Caco-2 (cell line): ENCODE measurements at regions of chr20 and their contacts with region 1.

Region 1: GRCh38 chr20:41136680-41137613 is at the start of gene PLCG1:
- DNase-seq: peak; percentile 93 to 99
- H3K4me3 ChIP-seq: peak within 1 kb of the TSS; percentile 96
- H3K4me3 Mint-ChIP-seq: peak within 1 kb of the TSS; percentile 83
- H3K27ac Mint-ChIP-seq: peak within 1 kb of the TSS; percentile 82
- H3K4me1 ChIP-seq: peaks cover 17% of the 10 kb centered on the region
- H3K4me1 Mint-ChIP-seq: peaks cover 21% of the 10 kb centered on the region
- H3K27me3 ChIP-seq: no peaks in the 10 kb centered on the region
- H3K27me3 Mint-ChIP-seq: no peaks in the 10 kb centered on the region
- CTCF ChIP-seq: no peak
- total RNA-seq, gene PLCG1: 196 and 205 TPM in 2 replicates

Region 2: GRCh38 chr20:41078329-41078728 is 58.6 kb before region 1 on chr20:
- CTCF ChIA-PET with region 1: no interaction called
- POLR2A ChIA-PET with region 1: no interaction called
- intact Hi-C with region 1: loop called (anchors 10 kb)
- DNase-seq: peak in 1 of 2 experiments; percentile 80
- H3K4me3 ChIP-seq: no peak overlapping the region
- H3K4me3 Mint-ChIP-seq: no peak overlapping the region
- H3K27ac Mint-ChIP-seq: peak overlapping the region; percentile 18
- H3K4me1 ChIP-seq: peaks cover 17% of the 10 kb centered on the region
- H3K4me1 Mint-ChIP-seq: peaks cover 29% of the 10 kb centered on the region
- H3K27me3 ChIP-seq: no peaks in the 10 kb centered on the region
- H3K27me3 Mint-ChIP-seq: no peaks in the 10 kb centered on the region
- CTCF ChIP-seq: peak; percentile 85 to 86

Region 3: GRCh38 chr20:41110930-41111577 is 25.9 kb before region 1 on chr20:
- CTCF ChIA-PET with region 1: interaction called, 13 read pairs
- POLR2A ChIA-PET with region 1: no interaction called
- intact Hi-C with region 1: loop called (anchors 2 kb)
- DNase-seq: peak; percentile 88 to 90
- H3K4me3 ChIP-seq: no peak overlapping the region
- H3K4me3 Mint-ChIP-seq: peak overlapping the region; percentile 42
- H3K27ac Mint-ChIP-seq: peak overlapping the region; percentile 91
- H3K4me1 ChIP-seq: peaks cover 30% of the 10 kb centered on the region
- H3K4me1 Mint-ChIP-seq: peaks cover 30% of the 10 kb centered on the region
- H3K27me3 ChIP-seq: no peaks in the 10 kb centered on the region
- H3K27me3 Mint-ChIP-seq: no peaks in the 10 kb centered on the region
- CTCF ChIP-seq: no peak

Region 4: DNA sequence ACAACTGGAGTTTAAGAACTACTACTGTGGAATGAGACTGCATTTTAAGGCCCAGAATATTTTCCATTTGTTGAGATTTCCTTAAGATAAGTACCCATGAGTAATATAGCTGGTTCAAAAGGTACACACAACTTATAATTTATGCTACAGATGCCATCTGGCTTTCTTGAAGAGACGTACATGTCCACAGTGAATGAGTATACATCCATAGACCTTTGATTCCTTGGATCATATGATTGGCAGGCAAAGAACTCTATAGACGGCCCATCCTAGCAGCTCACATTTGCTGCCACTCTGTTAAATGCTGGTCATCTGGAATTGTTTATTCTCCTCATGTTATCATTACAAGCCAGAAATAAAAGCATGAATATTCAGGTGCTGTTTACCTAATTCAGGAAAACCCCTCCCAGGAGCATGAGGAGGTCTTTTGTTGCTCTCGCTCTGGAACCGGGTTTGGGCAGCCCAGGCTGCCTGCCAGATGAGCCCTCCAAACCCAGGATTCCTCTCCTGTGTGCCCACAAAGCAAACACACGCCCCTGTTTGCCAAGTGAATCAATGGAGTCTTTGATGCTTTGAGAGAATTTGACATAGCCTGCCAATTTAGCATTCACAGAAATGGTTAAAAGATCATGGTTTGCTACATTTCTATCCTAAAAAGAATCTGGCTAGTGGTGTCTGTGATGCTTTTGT is 17.3 kb before region 1 on chr20:
- CTCF ChIA-PET with region 1: interaction called, 18 read pairs
- POLR2A ChIA-PET with region 1: no interaction called
- intact Hi-C with region 1: no loop called
- DNase-seq: no peak
- H3K4me3 ChIP-seq: no peak overlapping the region
- H3K4me3 Mint-ChIP-seq: no peak overlapping the region
- H3K27ac Mint-ChIP-seq: no peak overlapping the region
- H3K4me1 ChIP-seq: peaks cover 6% of the 10 kb centered on the region; the same call in 1 of the 2 replicates
- H3K4me1 Mint-ChIP-seq: no peaks in the 10 kb centered on the region
- H3K27me3 ChIP-seq: no peaks in the 10 kb centered on the region
- H3K27me3 Mint-ChIP-seq: no peaks in the 10 kb centered on the region
- CTCF ChIP-seq: no peak

Region 5: GRCh38 chr20:41173161-41173721 is 36.3 kb after region 1 on chr20:
- CTCF ChIA-PET with region 1: interaction called, 25 read pairs
- POLR2A ChIA-PET with region 1: no interaction called
- intact Hi-C with region 1: loop called (anchors 2 kb)
- DNase-seq: peak; percentile 85 to 94
- H3K4me3 ChIP-seq: no peak overlapping the region
- H3K4me3 Mint-ChIP-seq: no peak overlapping the region
- H3K27ac Mint-ChIP-seq: no peak overlapping the region
- H3K4me1 ChIP-seq: no peaks in the 10 kb centered on the region
- H3K4me1 Mint-ChIP-seq: no peaks in the 10 kb centered on the region
- H3K27me3 ChIP-seq: no peaks in the 10 kb centered on the region
- H3K27me3 Mint-ChIP-seq: no peaks in the 10 kb centered on the region
- CTCF ChIP-seq: peak; percentile 99 to 100

Region 6: GRCh38 chr20:41191562-41192500 is 54.9 kb after region 1 on chr20:
- CTCF ChIA-PET with region 1: no interaction called
- POLR2A ChIA-PET with region 1: no interaction called
- intact Hi-C with region 1: no loop called
- DNase-seq: no peak
- H3K4me3 ChIP-seq: no peak overlapping the region
- H3K4me3 Mint-ChIP-seq: no peak overlapping the region
- H3K27ac Mint-ChIP-seq: no peak overlapping the region
- H3K4me1 ChIP-seq: no peaks in the 10 kb centered on the region
- H3K4me1 Mint-ChIP-seq: no peaks in the 10 kb centered on the region
- H3K27me3 ChIP-seq: no peaks in the 10 kb centered on the region
- H3K27me3 Mint-ChIP-seq: no peaks in the 10 kb centered on the region
- CTCF ChIP-seq: no peak

Region 7: GRCh38 chr20:41232973-41233926 is 96.3 kb after region 1 on chr20:
- CTCF ChIA-PET with region 1: interaction called, 10 read pairs
- POLR2A ChIA-PET with region 1: no interaction called
- intact Hi-C with region 1: loop called (anchors 1 kb)
- DNase-seq: no peak
- H3K4me3 ChIP-seq: no peak overlapping the region
- H3K4me3 Mint-ChIP-seq: peak overlapping the region; percentile 39
- H3K27ac Mint-ChIP-seq: peak overlapping the region; percentile 10
- H3K4me1 ChIP-seq: peaks cover 9% of the 10 kb centered on the region
- H3K4me1 Mint-ChIP-seq: peaks cover 9% of the 10 kb centered on the region
- H3K27me3 ChIP-seq: no peaks in the 10 kb centered on the region; the same call in 1 of the 2 replicates
- H3K27me3 Mint-ChIP-seq: no peaks in the 10 kb centered on the region
- CTCF ChIP-seq: no peak

Region 8: GRCh38 chr20:41317536-41318270 is 180.8 kb after region 1 on chr20 and contains the start of gene ZHX3:
- CTCF ChIA-PET with region 1: interaction called, 12 read pairs
- POLR2A ChIA-PET with region 1: no interaction called
- intact Hi-C with region 1: loop called (anchors 2 kb)
- DNase-seq: peak; percentile 100
- H3K4me3 ChIP-seq: peak within 1 kb of the TSS; percentile 75
- H3K4me3 Mint-ChIP-seq: peak within 1 kb of the TSS; percentile 84
- H3K27ac Mint-ChIP-seq: peak within 1 kb of the TSS; percentile 10
- H3K4me1 ChIP-seq: peaks cover 18% of the 10 kb centered on the region
- H3K4me1 Mint-ChIP-seq: peaks cover 30% of the 10 kb centered on the region
- H3K27me3 ChIP-seq: no peaks in the 10 kb centered on the region
- H3K27me3 Mint-ChIP-seq: no peaks in the 10 kb centered on the region
- CTCF ChIP-seq: no peak
- total RNA-seq, gene ZHX3: 22.9 and 24.6 TPM in 2 replicates